ENCODE measurements at regions of chr3 and their contacts with region 1.

Region 1: GRCh38 chr3:193572426-193572908 is 17.8 kb upstream of the ATP13A4 start:
- DNase-seq: peak; percentile 84
- H3K4me3 Mint-ChIP-seq: no peak overlapping the region
- H3K27ac Mint-ChIP-seq: no peak overlapping the region
- H3K4me1 Mint-ChIP-seq: no peaks in the 10 kb centered on the region
- H3K27me3 Mint-ChIP-seq: peaks cover 5% of the 10 kb centered on the region

Region 2: GRCh38 chr3:192467230-192468140 is 1105.0 kb before region 1 on chr3:
- intact Hi-C with region 1: loop called (anchors 5 kb)
- DNase-seq: peak; percentile 83
- H3K4me3 Mint-ChIP-seq: no peak overlapping the region
- H3K27ac Mint-ChIP-seq: no peak overlapping the region
- H3K4me1 Mint-ChIP-seq: no peaks in the 10 kb centered on the region
- H3K27me3 Mint-ChIP-seq: peaks cover 13% of the 10 kb centered on the region

Region 3: GRCh38 chr3:193040836-193041672 is 531.4 kb before region 1 on chr3:
- intact Hi-C with region 1: loop called (anchors 2 kb)
- DNase-seq: peak; percentile 64
- H3K4me3 Mint-ChIP-seq: no peak overlapping the region
- H3K27ac Mint-ChIP-seq: peak overlapping the region; percentile 26
- H3K4me1 Mint-ChIP-seq: peaks cover 8% of the 10 kb centered on the region
- H3K27me3 Mint-ChIP-seq: peaks cover 17% of the 10 kb centered on the region

Region 4: GRCh38 chr3:193289281-193289680 is 283.2 kb before region 1 on chr3:
- intact Hi-C with region 1: no loop called
- DNase-seq: no peak
- H3K4me3 Mint-ChIP-seq: no peak overlapping the region
- H3K27ac Mint-ChIP-seq: no peak overlapping the region
- H3K4me1 Mint-ChIP-seq: no peaks in the 10 kb centered on the region
- H3K27me3 Mint-ChIP-seq: no peaks in the 10 kb centered on the region

Region 5: GRCh38 chr3:193465992-193466608 is 106.4 kb before region 1 on chr3:
- intact Hi-C with region 1: loop called (anchors 1 kb)
- DNase-seq: no peak
- H3K4me3 Mint-ChIP-seq: no peak overlapping the region
- H3K27ac Mint-ChIP-seq: no peak overlapping the region
- H3K4me1 Mint-ChIP-seq: no peaks in the 10 kb centered on the region
- H3K27me3 Mint-ChIP-seq: peaks cover 1% of the 10 kb centered on the region

Measured in activated CD4-positive, alpha-beta T cell treated with anti-CD3 and anti-CD28 coated beads, Interleukin-2, amount 10 ng/mL, durations not matched to agents 24 days and 14 days (primary cell).